GM10248 (cell line): ENCODE measurements at regions of chr10 and their contacts with region 1.

Region 1: GRCh38 chr10:80046629-80047441 is 31.6 kb upstream of the TMEM254 start:
- DNase-seq: peak; percentile 75
- CTCF ChIP-seq: peak; percentile 94

Region 2: GRCh38 chr10:79542626-79543025 is 504.2 kb before region 1 on chr10:
- CTCF ChIA-PET with region 1: interaction called, 16 read pairs
- POLR2A ChIA-PET with region 1: no interaction called
- DNase-seq: no peak
- CTCF ChIP-seq: no peak

Region 3: DNA sequence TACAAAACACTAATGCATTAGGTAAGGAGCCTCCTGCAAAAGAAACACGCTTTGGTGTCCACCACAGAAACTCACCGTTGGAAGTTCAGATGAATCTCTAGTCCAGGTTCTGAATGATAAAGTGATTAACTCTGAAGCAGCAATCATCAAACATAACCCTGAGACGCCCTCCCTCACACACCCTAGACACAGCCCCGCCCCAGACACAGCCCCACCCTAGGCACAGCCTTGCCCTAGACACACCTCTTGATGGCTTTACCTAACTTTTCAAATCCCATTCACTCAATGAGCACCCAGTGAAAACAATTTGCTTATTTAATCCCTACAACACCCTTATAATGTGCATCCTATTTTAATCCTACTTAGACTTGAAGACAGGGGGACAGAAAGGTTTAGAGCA is 10.3 kb after region 1 on chr10:
- CTCF ChIA-PET with region 1: interaction called, 27 read pairs
- POLR2A ChIA-PET with region 1: no interaction called
- DNase-seq: no peak
- CTCF ChIP-seq: no peak

Region 4: DNA sequence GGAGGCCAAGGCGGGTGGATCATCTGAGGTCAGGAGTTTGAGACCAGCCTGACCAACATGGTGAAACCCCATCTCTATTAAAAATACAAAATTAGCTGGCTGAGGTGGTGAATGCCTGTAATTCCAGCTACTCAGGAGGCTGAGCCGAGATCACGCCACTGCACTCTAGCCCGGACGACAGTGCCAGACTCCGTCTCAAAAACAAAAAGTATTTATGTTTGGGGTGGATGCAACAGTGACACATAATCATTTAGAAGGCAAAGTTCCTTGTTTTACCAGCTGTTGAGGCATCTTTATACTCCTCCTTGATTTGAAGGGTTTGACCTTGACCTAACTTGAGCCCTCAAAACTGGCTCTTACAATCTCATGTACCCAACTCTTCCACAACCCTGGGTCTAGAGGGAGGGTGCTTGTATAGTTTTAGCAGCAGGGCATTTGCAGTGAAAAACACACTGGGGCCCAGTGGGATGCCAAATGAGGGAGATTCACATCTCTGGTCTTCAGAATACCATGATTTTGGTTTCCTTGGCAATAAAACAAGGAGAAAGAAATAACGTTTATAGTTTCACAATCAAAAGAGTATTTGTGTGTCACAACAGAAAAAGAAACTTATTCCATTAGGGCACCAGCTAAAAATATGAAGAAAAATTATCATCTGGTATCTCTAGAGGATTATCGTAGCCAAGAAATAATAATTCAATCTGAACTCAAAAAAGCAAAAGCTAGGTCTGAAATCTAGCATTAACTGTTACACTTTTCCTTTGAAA is 17.5 kb after region 1 on chr10:
- CTCF ChIA-PET with region 1: interaction called, 27 read pairs
- POLR2A ChIA-PET with region 1: no interaction called
- DNase-seq: no peak
- CTCF ChIP-seq: no peak